A673 (cell line): ENCODE measurements at regions of chr2 and their contacts with region 1.

Region 1: DNA sequence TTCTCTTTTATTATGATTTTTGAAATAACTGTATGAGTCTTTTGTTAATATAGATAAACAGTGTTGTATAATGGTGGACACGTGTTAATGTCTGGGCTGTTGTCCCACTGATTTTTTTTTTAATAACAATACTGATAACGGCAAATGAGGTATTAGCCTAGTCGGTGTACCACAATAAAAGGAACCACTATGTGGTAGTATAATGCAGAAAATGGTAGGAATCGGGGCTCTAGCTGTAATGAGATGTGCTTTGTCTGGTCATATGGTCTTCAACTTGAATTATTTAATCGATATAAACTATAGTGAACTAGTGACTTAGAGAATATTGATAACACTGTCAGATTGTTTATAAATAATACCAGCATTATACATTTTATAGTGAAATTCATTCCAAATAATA is 517.9 kb upstream of the SPHKAP start:
- DNase-seq: peak; percentile 37
- H3K4me3 ChIP-seq: no peak overlapping the region
- H3K27ac ChIP-seq: no peak overlapping the region
- H3K4me1 ChIP-seq: peaks cover 3% of the 10 kb centered on the region
- H3K27me3 ChIP-seq: no peaks in the 10 kb centered on the region
- CTCF ChIP-seq: peak; percentile 47

Region 2: GRCh38 chr2:228407821-228408220 is 291.6 kb before region 1 on chr2:
- CTCF ChIA-PET with region 1: no interaction called
- POLR2A ChIA-PET with region 1: no interaction called
- intact Hi-C with region 1: no loop called
- DNase-seq: no peak
- H3K4me3 ChIP-seq: no peak overlapping the region
- H3K27ac ChIP-seq: no peak overlapping the region
- H3K4me1 ChIP-seq: no peaks in the 10 kb centered on the region
- H3K27me3 ChIP-seq: no peaks in the 10 kb centered on the region
- CTCF ChIP-seq: no peak

Region 3: DNA sequence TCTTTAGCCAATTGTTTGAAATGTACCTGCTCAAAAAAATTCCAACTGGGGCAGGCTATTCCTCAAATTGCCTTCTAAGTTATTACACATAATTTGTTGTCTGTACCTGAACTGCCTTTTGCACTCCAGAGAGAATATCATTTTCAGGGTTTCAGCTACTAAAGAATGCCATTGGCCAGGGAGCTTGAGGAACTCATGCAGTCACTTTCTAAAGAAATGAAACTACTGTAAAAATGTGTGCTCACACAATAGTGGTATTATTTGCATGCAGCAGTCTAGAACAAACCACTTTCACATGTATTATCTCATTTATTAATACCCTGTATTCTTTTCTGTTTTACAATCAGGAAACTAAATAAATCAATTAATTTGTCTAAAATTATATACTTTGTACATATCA is 419.5 kb after region 1 on chr2:
- CTCF ChIA-PET with region 1: no interaction called
- POLR2A ChIA-PET with region 1: no interaction called
- intact Hi-C with region 1: no loop called
- DNase-seq: no peak
- H3K4me3 ChIP-seq: no peak overlapping the region
- H3K27ac ChIP-seq: no peak overlapping the region
- H3K4me1 ChIP-seq: no peaks in the 10 kb centered on the region
- H3K27me3 ChIP-seq: no peaks in the 10 kb centered on the region
- CTCF ChIP-seq: no peak

Region 4: GRCh38 chr2:229133155-229133772 is 433.9 kb after region 1 on chr2:
- CTCF ChIA-PET with region 1: no interaction called
- POLR2A ChIA-PET with region 1: no interaction called
- intact Hi-C with region 1: loop called (anchors 5 kb)
- DNase-seq: peak; percentile 57
- H3K4me3 ChIP-seq: no peak overlapping the region
- H3K27ac ChIP-seq: no peak overlapping the region
- H3K4me1 ChIP-seq: no peaks in the 10 kb centered on the region
- H3K27me3 ChIP-seq: no peaks in the 10 kb centered on the region
- CTCF ChIP-seq: peak; percentile 64

Region 5: DNA sequence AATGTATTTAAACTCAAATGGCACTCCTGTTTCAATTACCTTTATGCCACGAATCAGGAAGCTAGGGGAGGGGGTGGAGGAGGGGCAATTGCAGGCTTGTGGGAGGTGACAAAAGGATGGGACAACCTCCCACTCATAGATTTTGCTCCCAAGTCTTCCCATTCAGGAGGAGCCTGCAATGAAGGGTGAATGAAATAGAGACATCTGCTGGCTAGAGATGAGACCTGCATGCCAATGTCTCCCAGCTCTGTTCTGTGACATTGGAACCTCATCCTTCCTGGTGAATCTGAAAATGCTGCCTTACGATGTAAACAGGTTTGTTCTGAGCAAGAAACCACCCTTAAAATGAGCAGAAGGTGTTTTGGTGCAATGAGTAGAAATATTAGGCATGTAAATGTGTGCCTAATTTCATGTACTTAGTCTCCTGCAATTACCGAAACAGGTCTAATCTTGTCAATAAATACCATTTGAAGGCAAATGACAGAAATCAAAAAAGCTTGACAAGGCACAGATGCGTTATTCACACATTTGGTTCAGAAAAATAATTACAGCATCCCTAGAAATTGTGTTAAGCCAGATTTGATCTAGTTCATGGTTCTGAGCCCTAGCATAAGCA is 574.4 kb after region 1 on chr2:
- CTCF ChIA-PET with region 1: interaction called, 3 read pairs
- POLR2A ChIA-PET with region 1: no interaction called
- intact Hi-C with region 1: loop called (anchors 2 kb)
- DNase-seq: peak; percentile 90
- H3K4me3 ChIP-seq: peak overlapping the region; percentile 22
- H3K27ac ChIP-seq: no peak overlapping the region
- H3K4me1 ChIP-seq: peaks cover 5% of the 10 kb centered on the region
- H3K27me3 ChIP-seq: peaks cover 7% of the 10 kb centered on the region
- CTCF ChIP-seq: peak; percentile 85

Region 6: DNA sequence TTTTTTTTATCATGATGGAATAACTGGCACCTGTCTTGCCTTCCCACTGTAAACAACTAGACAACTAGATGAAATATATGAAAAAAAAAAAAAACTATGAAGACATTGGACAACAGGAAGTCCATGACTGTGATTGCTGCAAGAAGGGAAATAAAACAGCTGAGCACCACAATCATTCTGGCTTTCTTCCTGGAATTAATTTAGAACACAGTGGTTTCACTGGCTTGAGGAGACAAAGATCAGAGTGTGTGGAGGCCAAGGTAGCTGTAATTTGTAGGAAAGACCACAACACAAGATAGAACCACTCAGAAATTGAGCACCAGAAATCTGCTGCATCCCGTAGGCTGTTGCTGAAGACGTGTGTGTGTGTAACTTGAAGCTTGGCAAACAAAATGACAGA is 692.8 kb after region 1 on chr2:
- CTCF ChIA-PET with region 1: interaction called, 12 read pairs
- POLR2A ChIA-PET with region 1: no interaction called
- intact Hi-C with region 1: no loop called
- DNase-seq: peak; percentile 9
- H3K4me3 ChIP-seq: no peak overlapping the region
- H3K27ac ChIP-seq: no peak overlapping the region
- H3K4me1 ChIP-seq: no peaks in the 10 kb centered on the region
- H3K27me3 ChIP-seq: no peaks in the 10 kb centered on the region
- CTCF ChIP-seq: no peak

Region 7: GRCh38 chr2:229714736-229715541 is 1015.5 kb after region 1 on chr2:
- CTCF ChIA-PET with region 1: no interaction called
- POLR2A ChIA-PET with region 1: no interaction called
- intact Hi-C with region 1: loop called (anchors 5 kb)
- DNase-seq: peak; percentile 55
- H3K4me3 ChIP-seq: peak overlapping the region; percentile 56
- H3K27ac ChIP-seq: no peak overlapping the region
- H3K4me1 ChIP-seq: peaks cover 8% of the 10 kb centered on the region
- H3K27me3 ChIP-seq: peaks cover 20% of the 10 kb centered on the region
- CTCF ChIP-seq: no peak